Thyroid gland (tissue), 4 donors: ENCODE measurements at regions of chr17 and their contacts with region 1.

Region 1: DNA sequence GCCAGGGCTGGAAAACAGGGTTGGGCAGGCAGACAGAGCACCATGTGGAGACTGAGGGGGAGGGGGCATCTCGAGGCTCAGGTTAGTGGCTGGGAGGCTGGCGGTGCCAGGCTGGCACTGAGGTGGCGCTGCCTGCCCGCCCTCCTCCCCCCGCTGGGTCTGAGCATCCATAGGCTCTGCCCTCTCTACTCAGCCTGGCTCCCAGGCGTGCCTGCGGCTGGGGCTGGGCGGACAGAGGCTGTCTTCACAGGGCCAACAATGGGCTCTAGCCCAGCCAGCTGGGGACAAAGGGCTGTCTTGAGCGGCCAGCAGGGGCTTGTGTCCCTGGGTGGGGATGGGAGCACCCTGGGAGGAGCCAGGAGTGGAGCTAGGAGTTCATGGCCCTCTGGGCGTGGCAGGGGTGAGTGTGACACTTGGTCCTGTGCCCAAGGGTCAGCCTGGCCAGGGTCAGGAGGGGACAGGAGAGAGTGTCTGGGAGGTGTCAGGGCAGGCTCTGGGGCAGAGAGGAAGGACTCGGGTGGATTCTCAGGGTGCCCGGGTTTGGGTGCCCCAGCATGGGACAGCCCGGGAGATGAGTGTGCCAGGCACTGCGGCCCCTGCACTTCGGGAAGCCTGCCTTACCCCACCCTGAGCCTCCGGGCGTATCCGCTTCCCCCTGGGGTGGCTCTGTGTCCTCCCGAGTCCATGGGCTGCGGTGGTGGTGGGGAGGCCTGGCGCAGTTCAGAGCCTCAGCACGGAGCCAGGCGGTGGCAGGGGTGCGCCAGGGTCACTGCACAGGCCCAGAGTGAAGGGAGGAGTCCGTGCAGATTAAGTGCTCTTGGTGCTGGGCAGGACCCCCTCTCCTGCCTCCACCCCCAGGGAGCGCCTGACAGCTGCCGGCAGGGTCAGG is 20.9 kb downstream of the MYBBP1A start:
- DNase-seq: no peak
- H3K4me3 ChIP-seq: no peak overlapping the region
- H3K27ac ChIP-seq: peak overlapping the region in 2 of 3 donors; percentile 12 to 36
- H3K4me1 ChIP-seq: peaks cover 0 to 64% of the 10 kb centered on the region in 2 donors
- H3K27me3 ChIP-seq: no peaks in the 10 kb centered on the region
- CTCF ChIP-seq: no peak
- POLR2A ChIP-seq: no peak

Region 2: GRCh38 chr17:4444782-4445473 is 89.3 kb before region 1 on chr17:
- intact Hi-C with region 1: loop called (anchors 10 kb)
- DNase-seq: no peak
- H3K4me3 ChIP-seq: no peak overlapping the region
- H3K27ac ChIP-seq: no peak overlapping the region
- H3K4me1 ChIP-seq: peaks cover 0 to 12% of the 10 kb centered on the region in 2 donors
- H3K27me3 ChIP-seq: no peaks in the 10 kb centered on the region
- CTCF ChIP-seq: no peak
- POLR2A ChIP-seq: no peak

Region 3: DNA sequence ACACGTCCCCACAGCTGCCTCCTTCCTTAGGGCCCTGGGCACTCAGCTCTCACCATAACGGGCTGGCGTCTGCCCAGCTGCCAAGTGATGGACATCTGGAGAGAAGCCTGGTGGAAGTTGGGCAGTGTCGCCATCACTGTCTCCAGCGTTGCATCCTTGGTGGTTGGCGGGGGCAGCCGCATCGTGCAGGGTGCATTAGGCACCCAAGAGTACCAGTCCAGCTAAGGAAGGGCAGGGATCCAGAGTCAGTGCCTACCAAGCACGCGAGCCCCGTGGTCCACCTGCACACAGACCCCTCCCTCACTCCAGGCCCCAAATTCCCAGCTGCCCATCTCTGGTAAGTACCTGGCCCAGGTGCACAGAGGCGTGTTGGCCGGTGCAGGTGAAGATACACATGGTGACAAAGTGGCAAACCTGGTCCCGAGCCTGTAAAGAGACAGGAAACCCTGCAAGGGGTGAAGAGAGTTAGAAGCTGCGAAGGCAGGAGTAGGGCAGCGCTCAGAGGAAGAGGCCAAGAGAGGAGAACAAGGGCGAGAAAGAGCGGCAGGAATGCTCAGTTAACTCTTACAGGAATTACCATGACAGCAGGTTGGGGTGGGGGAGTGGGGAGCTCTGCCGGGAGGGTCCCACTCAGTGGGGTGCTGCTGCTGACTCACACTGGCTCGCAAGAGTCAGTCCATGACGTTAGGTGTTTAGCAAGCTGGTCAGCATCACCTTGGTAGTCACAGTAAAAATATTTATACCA is 97.7 kb after region 1 on chr17:
- intact Hi-C with region 1: no loop called
- DNase-seq: no peak
- H3K4me3 ChIP-seq: no peak overlapping the region
- H3K27ac ChIP-seq: no peak overlapping the region
- H3K4me1 ChIP-seq: no peaks in the 10 kb centered on the region
- H3K27me3 ChIP-seq: no peaks in the 10 kb centered on the region
- CTCF ChIP-seq: no peak
- POLR2A ChIP-seq: no peak